Ascending aorta (tissue), 2 donors: ENCODE measurements at regions of chr7 and their contacts with region 1.

Region 1: DNA sequence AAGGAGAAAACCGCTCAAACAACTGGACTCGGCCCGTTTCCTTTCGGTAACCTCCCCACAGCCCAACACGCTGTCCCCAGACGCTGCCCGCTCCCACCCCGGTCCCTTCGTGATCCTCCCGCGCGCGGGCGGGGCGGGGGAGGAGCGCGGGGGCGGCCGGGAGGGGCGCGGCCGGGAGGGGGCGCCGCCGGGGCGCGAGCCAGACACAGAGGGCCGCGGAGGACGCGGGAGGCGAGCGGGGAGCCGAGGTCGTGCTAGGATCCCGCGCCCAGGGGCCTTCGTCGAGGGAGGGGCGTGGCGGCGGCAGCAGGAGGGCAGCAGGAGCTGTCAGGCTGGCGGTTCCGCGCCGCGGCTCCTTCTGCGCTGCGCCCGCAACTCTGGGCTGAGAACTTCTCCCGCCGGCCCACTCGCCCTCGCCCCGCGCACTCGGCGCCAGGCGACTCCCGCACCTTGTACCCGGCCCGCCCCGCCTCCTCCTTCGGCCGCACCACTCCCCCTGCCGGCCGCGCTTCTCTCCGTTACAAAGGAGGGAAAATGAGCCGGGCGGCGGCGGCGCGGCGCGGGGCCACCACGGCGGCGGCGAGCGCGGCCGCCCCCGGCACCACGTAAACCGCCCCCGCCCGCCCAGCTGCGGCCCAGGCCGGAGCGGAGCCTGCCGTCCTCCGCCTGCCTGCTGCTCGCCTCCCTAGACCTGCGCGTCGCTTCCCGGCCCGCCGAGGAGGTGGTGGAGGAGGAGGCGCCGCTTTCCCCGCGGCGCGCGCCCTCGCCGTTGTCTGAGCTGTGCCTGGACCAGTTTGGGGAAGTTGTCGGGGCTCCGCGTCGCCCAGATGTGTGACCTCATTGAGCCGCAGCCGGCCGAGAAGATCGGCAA is at the start of gene CDK14:
- DNase-seq: peak; percentile 39 to 88
- H3K4me3 ChIP-seq: peak within 1 kb of the TSS; percentile 78 to 93
- H3K27ac ChIP-seq: peak within 1 kb of the TSS; percentile 83 to 84
- H3K4me1 ChIP-seq: peaks cover 0 to 3% of the 10 kb centered on the region in 2 donors
- H3K27me3 ChIP-seq: no peaks in the 10 kb centered on the region
- CTCF ChIP-seq: peak; percentile 31 to 57 (median 45)
- total RNA-seq, gene CDK14: 5.1 TPM

Region 2: DNA sequence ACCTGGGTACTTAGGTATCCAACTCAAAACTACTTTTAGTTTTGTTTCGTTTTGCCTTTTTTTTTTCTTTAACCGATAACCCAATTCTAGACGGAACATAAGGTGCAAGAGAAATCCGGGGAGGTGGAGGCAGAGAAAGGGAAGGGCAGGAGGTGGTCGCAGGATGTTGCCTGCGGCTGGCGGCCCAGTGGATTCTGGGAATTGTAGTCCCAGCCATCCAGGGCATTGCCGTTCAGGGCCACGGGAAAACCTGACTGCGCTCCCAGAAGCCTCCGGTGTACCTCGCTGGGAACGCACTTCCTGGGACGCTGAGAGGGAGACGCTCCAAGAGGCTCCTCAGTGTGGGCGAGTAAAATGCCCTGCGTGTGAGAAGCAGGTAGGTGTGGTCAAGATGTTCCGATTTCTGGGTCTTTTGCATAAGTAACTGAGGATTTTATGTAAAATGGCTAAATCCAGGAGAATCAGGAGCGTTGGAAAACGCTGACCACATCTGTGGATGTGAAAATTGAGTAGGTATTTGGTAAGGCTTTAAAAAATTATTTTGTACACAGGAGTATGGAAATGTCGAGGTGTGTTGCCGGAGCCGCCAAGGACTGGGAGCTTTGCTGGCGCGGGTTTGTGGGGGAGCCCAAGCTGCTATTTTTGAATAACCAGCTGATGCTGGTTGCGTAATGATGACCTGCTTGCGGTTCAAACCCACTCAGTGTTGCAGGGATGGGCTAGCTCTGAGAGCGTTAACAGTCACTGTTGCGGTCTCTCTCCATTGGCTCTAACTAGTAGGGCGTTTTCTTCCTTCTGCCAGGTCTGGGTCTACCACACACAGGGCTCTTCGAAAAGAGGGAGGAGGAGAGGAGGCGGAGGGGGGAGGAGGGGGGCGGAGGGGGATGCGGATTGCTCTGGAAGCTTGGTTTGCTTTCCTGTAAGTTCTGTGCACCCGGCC is 192.6 kb before region 1 on chr7 and contains the start of gene CLDN12:
- intact Hi-C with region 1: loop called (anchors 5 kb)
- DNase-seq: peak; percentile 61 to 91
- H3K4me3 ChIP-seq: peak within 1 kb of the TSS; percentile 63 to 69
- H3K27ac ChIP-seq: peak within 1 kb of the TSS; percentile 84 to 88
- H3K4me1 ChIP-seq: no peaks in the 10 kb centered on the region
- H3K27me3 ChIP-seq: no peaks in the 10 kb centered on the region
- CTCF ChIP-seq: no peak
- total RNA-seq, gene CLDN12: 55.3 TPM

Region 3: DNA sequence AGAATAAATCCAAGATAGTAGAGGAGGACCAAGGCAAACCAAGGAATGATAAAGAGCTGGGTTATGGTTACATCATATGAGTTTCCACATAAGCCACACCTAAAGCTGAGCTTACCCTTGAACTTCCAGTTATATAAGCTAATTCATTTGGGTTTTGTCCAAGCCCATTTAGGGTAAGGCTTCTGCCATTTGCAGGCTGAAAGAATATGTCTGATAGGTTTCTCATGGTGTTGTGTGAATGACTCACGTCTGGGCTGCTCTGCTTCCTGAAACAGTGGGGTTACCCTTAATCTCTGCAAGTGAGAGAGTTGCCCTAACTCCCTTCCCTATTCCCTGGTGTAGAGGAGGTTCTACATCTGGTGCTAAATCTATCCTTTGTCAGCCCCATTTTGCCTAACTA is 65.8 kb before region 1 on chr7:
- intact Hi-C with region 1: no loop called
- DNase-seq: no peak
- H3K4me3 ChIP-seq: no peak overlapping the region
- H3K27ac ChIP-seq: no peak overlapping the region
- H3K4me1 ChIP-seq: no peaks in the 10 kb centered on the region
- H3K27me3 ChIP-seq: no peaks in the 10 kb centered on the region
- CTCF ChIP-seq: no peak

Region 4: GRCh38 chr7:90708841-90709317 is 112.8 kb after region 1 on chr7:
- intact Hi-C with region 1: loop called (anchors 5 kb)
- DNase-seq: no peak
- H3K4me3 ChIP-seq: no peak overlapping the region
- H3K27ac ChIP-seq: no peak overlapping the region
- H3K4me1 ChIP-seq: no peaks in the 10 kb centered on the region
- H3K27me3 ChIP-seq: no peaks in the 10 kb centered on the region
- CTCF ChIP-seq: peak in 2 of 3 experiments; percentile 32 to 40

Region 5: DNA sequence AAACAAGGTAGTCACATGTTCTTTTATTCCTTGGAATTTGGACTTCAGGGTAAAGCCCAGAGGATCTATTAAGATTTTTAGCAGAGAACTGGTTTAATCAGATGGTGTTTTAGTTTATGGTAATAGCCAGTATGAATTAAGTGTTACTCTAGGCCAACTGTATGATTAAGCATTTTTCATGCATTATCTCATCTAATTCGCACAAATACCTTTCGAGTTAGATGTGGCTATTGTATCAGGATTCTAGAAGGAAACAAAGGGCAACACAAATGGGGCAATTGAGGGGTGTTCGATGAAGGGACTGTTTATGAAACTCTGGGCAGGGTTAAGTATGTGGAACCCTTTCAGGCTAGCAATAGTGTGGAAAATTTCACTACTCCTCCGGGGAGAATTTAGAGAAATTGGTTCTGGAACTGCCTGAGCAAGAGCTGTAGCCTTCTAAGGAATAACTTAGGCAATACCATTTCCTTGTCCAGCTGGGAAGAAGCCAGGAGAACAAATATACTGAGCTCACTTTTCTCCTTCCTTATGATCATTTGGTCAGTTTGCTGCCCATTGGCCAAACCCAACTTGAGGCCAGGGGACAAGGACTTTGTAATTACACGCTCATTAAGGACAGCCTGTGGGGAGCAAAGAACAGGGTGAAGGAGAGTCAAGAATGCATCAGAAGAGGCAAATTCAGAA is 349.2 kb after region 1 on chr7:
- intact Hi-C with region 1: loop called (anchors 10 kb)
- DNase-seq: no peak
- H3K4me3 ChIP-seq: no peak overlapping the region
- H3K27ac ChIP-seq: peak overlapping the region; percentile 59 to 63
- H3K4me1 ChIP-seq: peaks cover 0 to 12% of the 10 kb centered on the region in 2 donors
- H3K27me3 ChIP-seq: no peaks in the 10 kb centered on the region
- CTCF ChIP-seq: no peak

Region 6: DNA sequence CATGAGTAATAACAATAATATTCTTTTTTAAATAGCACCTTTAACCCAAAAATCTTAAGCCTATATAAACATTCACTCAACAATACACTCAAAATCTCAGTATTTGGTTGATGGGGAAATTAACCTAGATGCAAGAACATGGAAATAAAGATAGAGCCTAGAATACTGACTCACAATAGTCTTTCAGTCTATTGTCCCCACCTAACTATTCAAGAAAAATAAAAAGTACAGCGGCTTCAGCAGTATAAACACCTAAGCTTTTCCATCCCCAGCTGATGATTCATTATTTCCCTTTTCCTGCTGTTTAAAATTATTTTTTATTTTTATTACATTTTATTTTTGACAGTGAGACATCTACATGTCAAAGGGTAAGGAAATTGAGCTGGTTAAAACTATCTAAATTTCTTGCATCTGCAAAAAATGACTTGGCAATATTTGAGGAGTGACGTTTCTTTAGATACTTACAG is 869.6 kb after region 1 on chr7:
- intact Hi-C with region 1: loop called (anchors 10 kb)
- DNase-seq: no peak
- H3K4me3 ChIP-seq: no peak overlapping the region
- H3K27ac ChIP-seq: peak overlapping the region; percentile 43 to 65
- H3K4me1 ChIP-seq: peaks cover 0 to 18% of the 10 kb centered on the region in 2 donors
- H3K27me3 ChIP-seq: no peaks in the 10 kb centered on the region
- CTCF ChIP-seq: no peak